CD4-positive, alpha-beta T cell (primary cell): ENCODE measurements at regions of chr3 and their contacts with region 1.

Region 1: GRCh38 chr3:32366638-32367397 is 24.8 kb upstream of the CMTM7 start:
- DNase-seq: no peak
- ATAC-seq: no peak
- H3K4me3 ChIP-seq: no peak overlapping the region
- H3K4me3 Mint-ChIP-seq: no peak overlapping the region
- H3K27ac ChIP-seq: no peak overlapping the region
- H3K27ac Mint-ChIP-seq: peak overlapping the region; percentile 93
- H3K4me1 ChIP-seq: peaks cover 20% of the 10 kb centered on the region
- H3K4me1 Mint-ChIP-seq: peaks cover 27% of the 10 kb centered on the region
- H3K27me3 ChIP-seq: no peaks in the 10 kb centered on the region
- H3K27me3 Mint-ChIP-seq: no peaks in the 10 kb centered on the region
- CTCF ChIP-seq: no peak

Region 2: DNA sequence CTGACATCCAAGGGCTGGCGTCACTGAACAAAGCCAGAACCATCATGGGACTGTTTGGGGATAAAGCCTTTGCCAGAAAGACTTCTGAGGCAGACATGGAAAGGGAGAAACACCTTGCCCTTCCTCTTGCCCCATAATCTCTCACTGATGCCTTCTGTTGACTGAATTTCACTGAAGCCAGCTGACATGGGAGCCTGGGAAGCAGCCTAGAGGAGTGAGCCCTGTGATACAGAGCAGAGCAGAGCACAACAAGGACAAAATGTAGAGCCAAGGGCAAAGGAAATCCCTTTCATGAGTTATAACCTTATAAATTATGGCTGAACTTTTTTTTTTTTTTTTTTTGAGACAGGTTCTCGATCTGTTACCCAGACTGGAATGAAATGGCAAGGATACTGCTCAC is 308.3 kb after region 1 on chr3:
- CTCF ChIA-PET with region 1: no interaction called
- POLR2A ChIA-PET with region 1: no interaction called
- intact Hi-C with region 1: loop called in 1 of 2 experiments (anchors 10 kb)
- DNase-seq: no peak
- ATAC-seq: no peak
- H3K4me3 ChIP-seq: no peak overlapping the region
- H3K4me3 Mint-ChIP-seq: no peak overlapping the region
- H3K27ac ChIP-seq: no peak overlapping the region
- H3K27ac Mint-ChIP-seq: no peak overlapping the region
- H3K4me1 ChIP-seq: no peaks in the 10 kb centered on the region
- H3K4me1 Mint-ChIP-seq: no peaks in the 10 kb centered on the region
- H3K27me3 ChIP-seq: peaks cover 0 to 4% of the 10 kb centered on the region in 2 experiments
- H3K27me3 Mint-ChIP-seq: no peaks in the 10 kb centered on the region
- CTCF ChIP-seq: no peak